Activated naive CD4-positive, alpha-beta T cell treated with anti-CD3 and anti-CD28 coated beads for 36 hours (primary cell): ENCODE measurements at regions of chrX and their contacts with region 1.

Region 1: GRCh38 chrX:45621376-45622041 is 420.8 kb upstream of the DIPK2B start:
- DNase-seq: peak; percentile 42
- H3K4me3 Mint-ChIP-seq: no peak overlapping the region
- H3K27ac Mint-ChIP-seq: peak overlapping the region; percentile 36
- H3K4me1 Mint-ChIP-seq: peaks cover 21% of the 10 kb centered on the region
- H3K27me3 Mint-ChIP-seq: peaks cover 6% of the 10 kb centered on the region

Region 2: DNA sequence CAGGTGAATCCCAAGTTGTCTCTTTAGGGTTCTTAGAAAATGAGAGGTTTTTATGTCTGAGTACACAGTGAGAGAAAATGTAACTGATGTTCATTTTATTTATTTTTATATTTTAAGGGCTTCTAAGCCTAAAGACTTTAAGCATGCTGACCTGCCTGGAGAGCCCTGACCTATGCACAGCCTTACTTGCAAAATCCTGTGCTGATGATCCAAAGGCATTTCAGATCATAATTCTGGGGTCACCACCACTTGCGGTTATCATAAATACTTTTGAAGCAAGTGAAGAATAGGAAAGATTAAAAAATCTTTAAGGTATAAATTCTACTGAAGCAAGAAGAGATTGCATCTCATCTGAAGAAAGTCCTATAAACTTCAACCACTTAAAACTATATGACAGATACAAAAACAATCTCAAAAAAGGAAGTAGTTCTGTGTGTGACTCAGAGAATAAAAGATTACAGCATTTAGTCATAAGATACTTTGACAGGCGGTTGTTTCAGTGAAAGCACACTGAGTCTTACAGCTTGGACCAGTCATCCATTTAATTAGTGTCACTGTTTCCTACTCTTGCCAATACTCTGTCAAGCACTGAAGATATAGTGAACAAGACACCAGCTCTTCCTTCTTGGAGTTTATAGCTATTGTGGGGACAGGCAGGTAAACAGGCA is 175.6 kb before region 1 on chrX:
- CTCF ChIA-PET with region 1: no interaction called
- intact Hi-C with region 1: loop called (anchors 5 kb)
- DNase-seq: no peak
- H3K4me3 Mint-ChIP-seq: no peak overlapping the region
- H3K27ac Mint-ChIP-seq: no peak overlapping the region
- H3K4me1 Mint-ChIP-seq: peaks cover 5% of the 10 kb centered on the region
- H3K27me3 Mint-ChIP-seq: no peaks in the 10 kb centered on the region

Region 3: DNA sequence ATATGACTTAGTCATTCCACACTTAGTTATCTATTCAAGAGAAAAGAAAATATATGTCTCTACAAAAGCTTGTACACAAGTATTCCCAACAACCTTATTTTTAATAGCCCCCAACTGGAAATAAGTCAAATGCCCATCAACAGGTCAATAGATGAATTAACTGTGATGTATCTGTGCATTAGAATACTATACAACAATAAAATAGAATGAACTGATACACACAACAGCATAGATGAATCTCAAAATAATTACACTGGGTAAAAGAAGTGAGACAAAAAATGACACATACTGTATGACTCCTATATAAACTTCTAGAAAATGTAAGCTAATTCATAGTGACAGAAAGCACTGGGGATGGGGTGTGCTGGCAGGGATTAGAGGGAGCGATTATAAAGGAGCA is 66.8 kb before region 1 on chrX:
- CTCF ChIA-PET with region 1: no interaction called
- intact Hi-C with region 1: no loop called
- DNase-seq: no peak
- H3K4me3 Mint-ChIP-seq: no peak overlapping the region
- H3K27ac Mint-ChIP-seq: no peak overlapping the region
- H3K4me1 Mint-ChIP-seq: no peaks in the 10 kb centered on the region
- H3K27me3 Mint-ChIP-seq: no peaks in the 10 kb centered on the region

Region 4: DNA sequence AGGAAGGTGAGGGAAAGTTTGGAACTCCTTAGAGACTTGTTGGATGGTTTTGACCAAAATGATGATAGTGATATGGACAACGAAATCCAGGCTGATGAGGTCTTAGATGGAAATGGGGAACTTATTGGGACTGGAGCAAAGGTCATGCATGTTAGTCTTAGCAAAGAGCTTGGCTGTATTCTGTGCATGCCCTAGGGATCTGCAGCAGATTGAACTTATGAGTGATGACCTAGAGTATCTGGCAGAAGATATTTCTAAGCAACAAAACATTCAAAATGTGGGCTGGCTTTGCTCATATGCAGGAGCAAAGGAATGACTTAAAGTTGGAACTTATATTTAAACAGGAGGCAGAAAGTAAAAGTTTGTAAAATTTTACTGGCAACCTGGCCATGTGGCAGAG is 68.5 kb after region 1 on chrX:
- CTCF ChIA-PET with region 1: no interaction called
- intact Hi-C with region 1: no loop called
- DNase-seq: no peak
- H3K4me3 Mint-ChIP-seq: no peak overlapping the region
- H3K27ac Mint-ChIP-seq: no peak overlapping the region
- H3K4me1 Mint-ChIP-seq: no peaks in the 10 kb centered on the region
- H3K27me3 Mint-ChIP-seq: no peaks in the 10 kb centered on the region

Region 5: DNA sequence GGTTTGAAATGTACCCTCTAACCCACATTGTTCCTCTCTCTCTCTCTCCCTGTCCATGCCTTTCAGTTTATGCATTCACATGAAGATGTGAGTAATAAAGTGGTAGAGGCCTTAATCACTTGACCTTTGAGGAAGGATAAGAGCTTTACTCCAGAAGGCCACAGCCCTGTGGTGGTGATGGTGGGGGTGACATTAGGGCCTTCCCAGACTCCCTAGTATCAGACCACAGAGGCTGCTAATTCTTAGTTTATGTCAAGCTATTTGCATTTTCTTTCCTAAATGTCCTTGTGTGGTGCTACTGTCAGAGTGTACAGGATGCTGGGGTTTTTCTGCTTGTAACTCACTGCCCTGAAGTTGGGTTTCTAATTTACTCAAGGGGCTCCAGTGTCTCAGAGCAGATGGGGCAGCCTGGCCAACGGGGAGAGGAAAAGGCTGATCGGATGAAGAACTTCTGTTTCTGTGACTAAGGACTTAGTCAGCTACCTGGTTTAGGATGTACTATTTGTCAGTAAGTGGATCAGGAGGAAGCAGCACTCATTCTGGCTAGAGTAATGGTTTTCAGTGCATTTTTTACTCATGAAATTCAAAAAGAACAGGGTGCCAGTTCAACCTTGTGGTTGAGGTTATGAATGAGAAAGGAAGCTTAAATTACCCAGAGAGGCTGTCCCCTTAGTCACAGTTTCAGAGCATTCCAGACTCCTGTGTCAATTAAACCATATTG is 88.7 kb after region 1 on chrX:
- CTCF ChIA-PET with region 1: no interaction called
- intact Hi-C with region 1: loop called (anchors 1 kb)
- DNase-seq: peak; percentile 71
- H3K4me3 Mint-ChIP-seq: no peak overlapping the region
- H3K27ac Mint-ChIP-seq: peak overlapping the region; percentile 69
- H3K4me1 Mint-ChIP-seq: peaks cover 42% of the 10 kb centered on the region
- H3K27me3 Mint-ChIP-seq: no peaks in the 10 kb centered on the region

Region 6: GRCh38 chrX:45758319-45758718 is 136.8 kb after region 1 on chrX:
- CTCF ChIA-PET with region 1: no interaction called
- intact Hi-C with region 1: loop called (anchors 1 kb)
- DNase-seq: peak; percentile 70
- H3K4me3 Mint-ChIP-seq: peak overlapping the region; percentile 62
- H3K27ac Mint-ChIP-seq: peak overlapping the region; percentile 86
- H3K4me1 Mint-ChIP-seq: peaks cover 71% of the 10 kb centered on the region
- H3K27me3 Mint-ChIP-seq: no peaks in the 10 kb centered on the region

Region 7: DNA sequence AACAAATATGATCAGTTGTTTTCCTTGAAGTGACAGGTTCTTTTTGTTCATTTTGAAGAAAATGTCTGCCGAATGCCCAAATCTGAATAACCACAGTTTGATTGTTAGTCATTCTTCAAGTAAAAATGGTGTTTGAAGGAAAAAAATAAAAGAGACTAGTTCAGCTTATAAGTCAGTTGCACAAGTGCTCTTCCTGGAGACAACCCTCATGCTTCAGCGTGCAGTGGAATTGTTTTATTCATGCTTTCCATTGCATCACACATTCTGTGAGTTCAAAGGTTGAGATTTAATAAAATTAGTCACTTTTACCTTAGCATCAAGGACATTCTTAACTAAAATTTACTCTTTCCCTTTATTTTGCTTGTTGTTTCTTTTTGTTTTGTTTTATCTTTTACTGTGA is 518.8 kb after region 1 on chrX:
- CTCF ChIA-PET with region 1: no interaction called
- intact Hi-C with region 1: loop called (anchors 1 kb)
- DNase-seq: peak; percentile 46
- H3K4me3 Mint-ChIP-seq: no peak overlapping the region
- H3K27ac Mint-ChIP-seq: peak overlapping the region; percentile 69
- H3K4me1 Mint-ChIP-seq: peaks cover 16% of the 10 kb centered on the region
- H3K27me3 Mint-ChIP-seq: no peaks in the 10 kb centered on the region